CD8-positive, alpha-beta T cell (primary cell): ENCODE measurements at regions of chr1 and their contacts with region 1.

Region 1: GRCh38 chr1:1115786-1116700 is at the start of gene C1orf159:
- DNase-seq: peak; percentile 98 to 100 (median 98)
- ATAC-seq: peak; percentile 94
- H3K4me3 ChIP-seq: peak within 1 kb of the TSS; percentile 51 to 66
- H3K4me3 Mint-ChIP-seq: peak within 1 kb of the TSS; percentile 90
- H3K27ac ChIP-seq: peak within 1 kb of the TSS; percentile 47 to 64
- H3K27ac Mint-ChIP-seq: peak within 1 kb of the TSS; percentile 82
- H3K4me1 ChIP-seq: peaks cover 11% of the 10 kb centered on the region
- H3K4me1 Mint-ChIP-seq: peaks cover 13% of the 10 kb centered on the region
- H3K27me3 ChIP-seq: peaks cover 0 to 3% of the 10 kb centered on the region in 2 experiments
- H3K27me3 Mint-ChIP-seq: peaks cover 4% of the 10 kb centered on the region
- CTCF ChIP-seq: no peak
- total RNA-seq, gene C1orf159: 14.3 to 17.6 TPM

Region 2: DNA sequence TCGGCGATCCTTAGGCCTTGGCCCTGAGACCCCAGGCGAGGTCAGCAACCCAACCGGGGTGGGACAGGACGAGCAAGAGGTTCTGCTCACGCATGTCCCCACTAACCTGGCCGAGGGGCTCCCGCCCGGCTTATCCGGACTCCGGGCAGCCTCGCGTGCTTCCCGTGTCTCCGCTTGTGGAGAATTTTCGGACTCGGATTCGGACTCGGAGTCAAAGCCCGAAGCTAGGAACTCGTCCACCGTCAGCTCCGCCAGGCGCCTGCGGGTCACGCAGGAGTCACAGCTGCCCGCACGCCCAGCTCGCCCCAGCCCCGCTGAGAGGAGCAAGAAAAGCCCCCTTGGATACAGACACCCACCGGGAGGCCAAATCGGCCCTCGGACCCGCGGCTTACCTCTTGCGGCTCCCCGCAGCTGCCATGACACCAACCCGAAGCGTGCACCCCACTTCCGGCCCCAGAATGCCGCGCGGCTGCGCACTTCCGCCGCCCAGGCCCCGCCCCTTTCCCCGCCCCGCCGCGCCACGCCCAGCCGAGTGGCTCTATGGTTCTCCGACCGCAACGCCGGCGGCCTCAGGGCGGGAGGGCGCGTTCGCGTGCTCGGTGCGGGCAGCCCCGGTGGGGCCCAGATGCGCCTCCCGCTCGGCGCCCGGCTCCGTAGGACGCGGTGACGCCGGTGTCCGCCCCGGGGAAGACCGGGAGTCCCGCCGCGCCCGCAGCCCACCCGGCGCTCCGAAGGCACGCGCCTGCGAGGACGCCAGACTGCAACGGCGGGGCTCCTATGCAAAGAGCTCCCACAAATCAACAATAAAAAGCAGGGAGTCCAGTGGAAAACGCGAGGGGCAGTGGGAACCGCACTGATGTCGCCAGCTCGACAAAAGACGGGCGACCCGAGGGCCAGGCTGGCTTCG is 157.0 kb before region 1 on chr1 and contains the start of gene NOC2L:
- CTCF ChIA-PET with region 1: no interaction called
- POLR2A ChIA-PET with region 1: no interaction called
- intact Hi-C with region 1: loop called in 1 of 2 experiments (anchors 5 kb)
- DNase-seq: peak; percentile 91 to 99 (median 96)
- ATAC-seq: peak; percentile 83
- H3K4me3 ChIP-seq: peak within 1 kb of the TSS; percentile 99 to 100
- H3K4me3 Mint-ChIP-seq: peak within 1 kb of the TSS; percentile 86
- H3K27ac ChIP-seq: peak within 1 kb of the TSS; percentile 75 to 80
- H3K27ac Mint-ChIP-seq: peak within 1 kb of the TSS; percentile 77
- H3K4me1 ChIP-seq: peaks cover 29% of the 10 kb centered on the region
- H3K4me1 Mint-ChIP-seq: peaks cover 8% of the 10 kb centered on the region
- H3K27me3 ChIP-seq: no peaks in the 10 kb centered on the region
- H3K27me3 Mint-ChIP-seq: no peaks in the 10 kb centered on the region
- CTCF ChIP-seq: no peak
- total RNA-seq, gene NOC2L: 54.0 to 54.7 TPM

Region 3: GRCh38 chr1:1033009-1033587 is 82.9 kb before region 1 on chr1:
- CTCF ChIA-PET with region 1: no interaction called
- POLR2A ChIA-PET with region 1: no interaction called
- intact Hi-C with region 1: loop called (anchors 1 kb)
- DNase-seq: peak; percentile 72 to 93 (median 85)
- ATAC-seq: peak; percentile 94
- H3K4me3 ChIP-seq: peak overlapping the region; percentile 23 to 24
- H3K4me3 Mint-ChIP-seq: peak overlapping the region; percentile 74
- H3K27ac ChIP-seq: no peak overlapping the region
- H3K27ac Mint-ChIP-seq: no peak overlapping the region
- H3K4me1 ChIP-seq: peaks cover 13% of the 10 kb centered on the region
- H3K4me1 Mint-ChIP-seq: peaks cover 7% of the 10 kb centered on the region
- H3K27me3 ChIP-seq: peaks cover 0 to 27% of the 10 kb centered on the region in 2 experiments
- H3K27me3 Mint-ChIP-seq: peaks cover 20% of the 10 kb centered on the region
- CTCF ChIP-seq: peak; percentile 95

Region 4: GRCh38 chr1:1098681-1099421 is 17.2 kb before region 1 on chr1:
- CTCF ChIA-PET with region 1: no interaction called
- POLR2A ChIA-PET with region 1: interaction called, 3 read pairs
- intact Hi-C with region 1: loop called in 1 of 2 experiments (anchors 1 kb)
- DNase-seq: peak in 2 of 9 experiments; percentile 56 to 63
- ATAC-seq: no peak
- H3K4me3 ChIP-seq: no peak overlapping the region
- H3K4me3 Mint-ChIP-seq: peak overlapping the region; percentile 8
- H3K27ac ChIP-seq: peak overlapping the region in 1 of 2 experiments; percentile 55
- H3K27ac Mint-ChIP-seq: peak overlapping the region; percentile 83
- H3K4me1 ChIP-seq: peaks cover 47% of the 10 kb centered on the region
- H3K4me1 Mint-ChIP-seq: peaks cover 36% of the 10 kb centered on the region
- H3K27me3 ChIP-seq: no peaks in the 10 kb centered on the region
- H3K27me3 Mint-ChIP-seq: no peaks in the 10 kb centered on the region
- CTCF ChIP-seq: no peak

Region 5: DNA sequence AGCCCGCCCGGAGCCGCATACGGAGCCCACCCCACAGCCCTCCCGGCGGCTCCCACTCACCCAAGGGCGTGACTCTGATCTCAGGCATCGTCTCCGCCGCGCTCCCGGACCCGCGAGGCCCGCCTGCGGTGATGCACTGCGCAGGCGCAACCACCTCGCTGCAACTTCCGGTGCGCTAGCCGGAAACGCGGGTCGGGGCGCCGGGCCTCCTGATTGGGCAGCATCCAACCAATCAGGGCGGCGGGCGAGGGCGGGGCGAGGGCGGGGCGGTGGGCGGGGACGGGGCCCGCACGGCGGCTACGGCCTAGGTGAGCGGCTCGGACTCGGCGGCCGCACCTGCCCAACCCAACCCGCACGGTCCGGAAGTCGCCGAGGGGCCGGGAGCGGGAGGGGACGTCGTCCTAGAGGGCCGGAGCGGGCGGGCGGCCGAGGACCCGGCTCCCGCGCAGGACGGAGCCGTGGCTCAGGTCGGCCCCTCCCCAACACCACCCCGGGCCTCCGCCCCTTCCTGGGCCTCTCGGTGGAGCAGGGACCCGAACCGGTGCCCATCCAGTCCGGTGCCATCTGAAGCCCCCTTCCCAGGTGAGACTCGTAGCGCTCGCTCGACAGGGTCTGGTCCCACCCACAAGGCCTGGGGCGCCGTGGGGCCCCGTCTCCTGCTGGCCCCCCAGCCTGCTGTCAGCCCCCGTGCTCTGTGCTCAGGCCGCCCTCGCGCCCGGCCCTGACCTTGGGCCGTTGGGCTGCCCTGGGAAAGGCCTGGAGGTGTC is 208.7 kb after region 1 on chr1 and contains the starts of genes CPTP and INTS11:
- CTCF ChIA-PET with region 1: no interaction called
- POLR2A ChIA-PET with region 1: no interaction called
- intact Hi-C with region 1: loop called in 1 of 2 experiments (anchors 1 kb)
- DNase-seq: peak; percentile 89 to 98 (median 96)
- ATAC-seq: peak; percentile 86
- H3K4me3 ChIP-seq: peak within 1 kb of the TSS; percentile 60 to 77
- H3K4me3 Mint-ChIP-seq: peak within 1 kb of the TSS; percentile 89
- H3K27ac ChIP-seq: peak within 1 kb of the TSS; percentile 73
- H3K27ac Mint-ChIP-seq: peak within 1 kb of the TSS; percentile 89
- H3K4me1 ChIP-seq: peaks cover 35% of the 10 kb centered on the region
- H3K4me1 Mint-ChIP-seq: peaks cover 35% of the 10 kb centered on the region
- H3K27me3 ChIP-seq: no peaks in the 10 kb centered on the region
- H3K27me3 Mint-ChIP-seq: no peaks in the 10 kb centered on the region
- CTCF ChIP-seq: no peak
- total RNA-seq, gene CPTP: 7.3 to 7.9 TPM
- total RNA-seq, gene INTS11: 139 to 156 TPM

Region 6: DNA sequence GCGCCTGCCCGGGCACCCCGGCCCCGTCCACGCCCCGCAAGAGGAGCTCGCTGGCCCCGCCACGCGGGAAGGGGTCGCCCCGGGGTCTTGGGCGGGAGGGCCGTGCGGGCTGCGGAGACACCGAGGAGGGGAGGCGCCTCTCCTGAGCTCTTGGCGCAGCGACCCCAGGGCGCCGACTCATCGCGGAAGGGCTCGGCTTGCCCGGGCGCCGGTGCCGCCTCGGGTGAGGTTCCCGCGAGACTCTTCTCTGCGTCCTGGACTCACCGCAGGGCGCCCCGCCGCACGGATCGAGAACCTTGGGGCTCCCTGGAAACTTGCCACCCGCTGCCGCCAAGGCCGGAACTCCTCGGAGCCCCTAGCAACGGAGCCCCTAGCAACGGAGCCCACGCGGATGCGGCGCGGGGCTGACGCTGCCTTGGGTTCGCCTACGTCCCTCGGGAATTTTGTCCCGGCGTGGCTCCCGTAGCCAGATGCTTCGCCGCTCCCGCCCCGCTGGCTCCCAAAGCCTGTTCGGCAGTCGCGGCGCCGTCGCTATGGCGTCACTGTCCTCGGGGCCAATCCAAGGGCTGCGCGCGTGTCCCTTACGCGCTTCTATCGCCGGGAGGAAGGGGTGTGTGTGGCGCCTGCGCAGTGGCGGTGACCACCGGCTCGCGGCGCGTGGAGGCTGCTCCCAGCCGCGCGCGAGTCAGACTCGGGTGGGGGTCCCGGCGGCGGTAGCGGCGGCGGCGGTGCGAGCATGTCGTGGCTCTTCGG is 395.7 kb after region 1 on chr1 and contains the start of gene ATAD3A:
- CTCF ChIA-PET with region 1: no interaction called
- POLR2A ChIA-PET with region 1: no interaction called
- intact Hi-C with region 1: loop called in 1 of 2 experiments (anchors 5 kb)
- DNase-seq: peak; percentile 83 to 98 (median 95)
- ATAC-seq: peak; percentile 94
- H3K4me3 ChIP-seq: peak within 1 kb of the TSS; percentile 81 to 99
- H3K4me3 Mint-ChIP-seq: peak within 1 kb of the TSS; percentile 88
- H3K27ac ChIP-seq: peak within 1 kb of the TSS; percentile 90 to 97
- H3K27ac Mint-ChIP-seq: peak within 1 kb of the TSS; percentile 94
- H3K4me1 ChIP-seq: peaks cover 6% of the 10 kb centered on the region
- H3K4me1 Mint-ChIP-seq: peaks cover 11% of the 10 kb centered on the region
- H3K27me3 ChIP-seq: no peaks in the 10 kb centered on the region
- H3K27me3 Mint-ChIP-seq: no peaks in the 10 kb centered on the region
- CTCF ChIP-seq: no peak
- total RNA-seq, gene ATAD3A: 27.0 to 29.6 TPM